ENCODE measurements at regions of chr15 and their contacts with region 1.

Region 1: DNA sequence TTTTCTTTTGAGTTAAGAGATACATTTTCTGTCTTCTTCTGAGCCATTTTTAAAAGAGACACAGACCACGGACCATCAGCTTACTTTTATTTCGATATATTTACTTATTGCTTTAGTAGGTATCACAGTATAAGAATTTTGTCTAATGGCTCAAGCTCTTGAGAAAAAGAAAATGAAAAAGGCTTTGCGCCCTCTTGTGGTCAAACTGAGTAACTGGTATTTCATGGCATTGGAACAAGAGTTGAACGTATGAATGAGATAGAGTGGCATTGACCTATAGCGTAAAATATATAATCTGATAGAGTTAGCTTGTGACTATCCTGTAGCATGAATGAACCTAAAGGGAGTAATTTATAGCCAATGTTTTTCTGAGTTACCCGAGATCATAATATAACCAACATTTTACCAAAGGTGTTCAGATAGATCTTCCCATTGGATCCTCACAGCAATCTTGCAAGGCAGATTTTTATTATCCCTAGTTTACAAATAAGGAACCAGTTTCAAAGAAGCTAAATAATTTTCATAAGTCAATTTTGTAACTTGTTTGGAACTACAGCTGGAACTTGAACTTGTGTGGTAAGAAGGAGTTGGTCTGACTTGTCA is 154.6 kb downstream of the POLR2M start:
- DNase-seq: peak; percentile 20
- H3K4me3 Mint-ChIP-seq: no peak overlapping the region
- H3K27ac Mint-ChIP-seq: no peak overlapping the region
- H3K4me1 Mint-ChIP-seq: no peaks in the 10 kb centered on the region
- H3K27me3 Mint-ChIP-seq: peaks cover 9% of the 10 kb centered on the region

Region 2: DNA sequence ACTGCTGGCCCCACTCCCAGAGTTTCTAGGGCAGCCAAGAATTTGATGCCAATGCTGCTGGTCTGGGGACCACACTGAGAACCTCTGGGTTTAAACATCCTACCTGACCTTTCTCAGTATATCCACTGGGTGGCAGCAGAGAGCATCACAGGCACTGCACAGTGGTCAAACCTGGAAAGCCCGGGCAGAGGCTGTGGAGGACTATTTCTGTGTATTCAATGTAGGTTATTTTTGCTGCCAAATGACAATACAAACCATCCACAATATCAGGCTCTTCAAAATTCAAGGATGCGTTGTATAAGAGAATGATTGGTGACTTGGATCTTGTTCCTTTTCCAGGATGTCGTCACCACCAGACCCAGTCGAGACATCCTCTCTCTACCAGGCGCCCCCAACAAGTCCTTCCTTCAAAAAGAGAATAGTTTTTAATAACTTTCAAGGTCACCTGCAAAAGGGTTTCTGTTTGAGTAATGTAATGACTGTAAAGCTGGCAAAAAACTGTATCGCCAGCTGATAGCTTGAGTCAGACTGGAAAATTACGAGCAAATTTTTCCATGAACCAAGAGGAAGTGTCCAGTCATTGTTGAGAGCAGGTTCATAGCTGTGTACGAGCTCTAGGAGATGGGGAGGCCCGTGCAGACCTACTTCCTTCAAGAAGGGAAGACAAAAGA is 300.0 kb before region 1 on chr15:
- CTCF ChIA-PET with region 1: interaction called, 51 read pairs
- POLR2A ChIA-PET with region 1: no interaction called
- intact Hi-C with region 1: loop called (anchors 1 kb)
- DNase-seq: peak; percentile 73
- H3K4me3 Mint-ChIP-seq: peak overlapping the region; percentile 5
- H3K27ac Mint-ChIP-seq: peak overlapping the region; percentile 74
- H3K4me1 Mint-ChIP-seq: peaks cover 39% of the 10 kb centered on the region
- H3K27me3 Mint-ChIP-seq: peaks cover 2% of the 10 kb centered on the region

Region 3: DNA sequence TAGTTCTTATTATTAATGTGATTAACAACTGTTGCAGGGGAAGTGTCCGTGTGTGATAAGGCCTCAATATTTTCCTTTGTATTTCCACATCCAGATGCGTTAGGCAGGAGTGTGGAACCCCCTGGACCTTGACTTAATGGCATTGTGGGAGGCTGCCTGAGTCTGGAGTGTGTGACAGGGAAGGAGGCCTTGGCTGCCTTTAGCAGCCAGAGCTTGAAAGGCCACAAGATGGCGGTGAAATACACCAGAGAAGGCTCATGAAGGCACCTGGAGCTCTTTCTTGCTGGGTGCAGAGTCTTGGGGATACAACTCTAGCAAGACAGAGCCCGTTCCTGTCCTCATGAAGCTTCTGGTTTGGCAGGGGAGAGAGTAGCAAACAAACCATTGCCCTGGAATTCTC is 117.7 kb before region 1 on chr15:
- CTCF ChIA-PET with region 1: interaction called, 41 read pairs
- POLR2A ChIA-PET with region 1: no interaction called
- intact Hi-C with region 1: no loop called
- DNase-seq: no peak
- H3K4me3 Mint-ChIP-seq: no peak overlapping the region
- H3K27ac Mint-ChIP-seq: no peak overlapping the region
- H3K4me1 Mint-ChIP-seq: no peaks in the 10 kb centered on the region
- H3K27me3 Mint-ChIP-seq: no peaks in the 10 kb centered on the region

Region 4: GRCh38 chr15:57832183-57832582 is 29.0 kb before region 1 on chr15:
- CTCF ChIA-PET with region 1: interaction called, 13 read pairs
- POLR2A ChIA-PET with region 1: no interaction called
- intact Hi-C with region 1: no loop called
- DNase-seq: no peak
- H3K4me3 Mint-ChIP-seq: no peak overlapping the region
- H3K27ac Mint-ChIP-seq: no peak overlapping the region
- H3K4me1 Mint-ChIP-seq: no peaks in the 10 kb centered on the region
- H3K27me3 Mint-ChIP-seq: peaks cover 49% of the 10 kb centered on the region

Region 5: GRCh38 chr15:57873564-57874209 is 12.6 kb after region 1 on chr15:
- CTCF ChIA-PET with region 1: interaction called, 36 read pairs
- POLR2A ChIA-PET with region 1: no interaction called
- intact Hi-C with region 1: no loop called
- DNase-seq: no peak
- H3K4me3 Mint-ChIP-seq: no peak overlapping the region
- H3K27ac Mint-ChIP-seq: no peak overlapping the region
- H3K4me1 Mint-ChIP-seq: no peaks in the 10 kb centered on the region
- H3K27me3 Mint-ChIP-seq: peaks cover 28% of the 10 kb centered on the region